WTC11 (cell line): ENCODE measurements at regions of chr1 and their contacts with region 1.

Region 1: GRCh38 chr1:178300352-178300699 is 196.4 kb downstream of the CLEC20A start:
- DNase-seq: no peak
- ATAC-seq: no peak
- H3K4me3 Mint-ChIP-seq: no peak overlapping the region
- H3K27ac Mint-ChIP-seq: peak overlapping the region; percentile 87; the same call in 1 of the 2 replicates
- H3K4me1 Mint-ChIP-seq: peaks cover 28% of the 10 kb centered on the region
- H3K27me3 Mint-ChIP-seq: no peaks in the 10 kb centered on the region
- CTCF ChIP-seq: no peak

Region 2: DNA sequence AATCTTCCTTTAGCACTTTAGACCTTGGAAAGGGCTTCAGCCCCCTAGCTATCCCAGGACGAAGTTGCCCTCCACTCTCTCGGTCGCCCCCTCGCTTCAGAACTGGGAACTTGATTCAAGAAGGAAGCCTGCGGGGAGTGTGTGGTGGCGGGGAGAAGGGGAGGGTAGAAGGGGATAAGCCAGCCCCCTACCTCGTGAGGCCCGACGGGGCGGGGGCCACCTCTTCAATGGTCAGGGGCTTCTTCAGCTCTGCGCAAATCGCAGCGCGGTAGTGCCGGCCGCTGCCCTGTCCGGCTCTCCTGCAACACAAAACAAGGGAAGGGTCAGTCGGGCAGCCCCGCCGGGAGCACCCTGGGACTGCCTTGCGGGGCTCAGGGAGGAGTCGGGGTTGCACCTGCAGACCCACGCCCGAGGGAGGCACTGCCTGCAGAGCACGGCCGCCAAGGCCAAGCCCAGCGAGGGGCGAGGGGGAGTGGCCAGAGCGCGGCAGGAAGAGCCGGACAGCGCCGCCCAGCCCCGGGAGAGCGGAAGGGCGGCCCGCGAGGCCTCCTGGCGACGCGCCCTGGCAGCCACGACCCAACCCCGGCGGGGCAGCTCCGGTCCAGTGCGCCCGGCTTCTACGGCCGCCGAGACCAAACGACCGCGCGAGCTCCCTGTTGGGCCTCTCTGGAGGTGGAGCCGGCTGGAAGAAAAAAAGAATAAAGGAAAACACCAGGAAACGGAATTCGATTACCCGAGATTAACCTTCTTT is 262.6 kb before region 1 on chr1:
- CTCF ChIA-PET with region 1: interaction called, 21 read pairs
- POLR2A ChIA-PET with region 1: no interaction called
- DNase-seq: peak; percentile 85
- ATAC-seq: peak; percentile 94
- H3K4me3 Mint-ChIP-seq: peak overlapping the region; percentile 58
- H3K27ac Mint-ChIP-seq: no peak overlapping the region
- H3K4me1 Mint-ChIP-seq: peaks cover 17% of the 10 kb centered on the region
- H3K27me3 Mint-ChIP-seq: peaks cover 2% of the 10 kb centered on the region; the same call in 1 of the 2 replicates
- CTCF ChIP-seq: peak; percentile 56

Region 3: DNA sequence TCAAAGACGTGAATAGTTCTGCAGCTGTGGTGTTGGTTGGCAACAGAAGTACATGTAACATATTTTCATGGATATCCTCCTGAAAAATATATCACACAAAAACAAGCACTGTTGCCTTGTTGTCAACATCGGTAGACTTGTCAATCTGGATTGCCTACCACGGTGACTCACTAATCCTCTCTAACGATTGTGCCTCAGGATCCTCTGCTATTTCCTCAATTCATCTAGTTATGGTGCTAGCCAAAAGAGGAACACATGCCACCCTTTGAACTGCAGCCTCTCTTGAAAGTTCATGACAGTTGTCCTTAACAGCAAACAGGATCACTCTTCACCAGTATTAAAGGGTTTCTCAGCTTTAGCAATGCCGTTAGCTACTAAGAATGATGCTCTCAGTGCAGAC is 180.7 kb before region 1 on chr1:
- CTCF ChIA-PET with region 1: no interaction called
- POLR2A ChIA-PET with region 1: no interaction called
- DNase-seq: no peak
- ATAC-seq: no peak
- H3K4me3 Mint-ChIP-seq: no peak overlapping the region
- H3K27ac Mint-ChIP-seq: no peak overlapping the region
- H3K4me1 Mint-ChIP-seq: peaks cover 24% of the 10 kb centered on the region
- H3K27me3 Mint-ChIP-seq: no peaks in the 10 kb centered on the region
- CTCF ChIP-seq: no peak

Region 4: DNA sequence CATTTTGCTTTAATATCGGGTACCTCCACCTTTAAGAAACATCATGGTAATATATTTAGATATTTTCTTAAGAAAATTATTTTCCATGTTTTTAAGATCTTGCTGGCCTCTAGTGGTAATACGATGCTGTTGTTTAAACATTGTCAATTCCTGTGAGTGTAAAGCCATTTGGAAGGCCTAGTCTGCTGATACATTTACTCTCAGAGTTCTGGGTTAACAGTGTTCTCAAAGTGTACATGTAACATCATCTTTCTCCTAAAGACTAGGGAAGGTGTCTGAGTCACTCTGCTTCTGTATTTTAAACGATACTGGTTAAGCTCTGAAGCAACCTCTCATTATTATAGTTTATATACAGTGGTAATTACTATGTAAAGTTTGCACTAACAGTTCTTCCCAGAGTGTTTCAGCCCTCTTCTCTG is 17.4 kb before region 1 on chr1:
- CTCF ChIA-PET with region 1: interaction called, 12 read pairs
- POLR2A ChIA-PET with region 1: no interaction called
- DNase-seq: no peak
- ATAC-seq: peak; percentile 37
- H3K4me3 Mint-ChIP-seq: peak overlapping the region; percentile 62
- H3K27ac Mint-ChIP-seq: peak overlapping the region; percentile 96
- H3K4me1 Mint-ChIP-seq: peaks cover 77% of the 10 kb centered on the region
- H3K27me3 Mint-ChIP-seq: no peaks in the 10 kb centered on the region
- CTCF ChIP-seq: no peak

Region 5: GRCh38 chr1:178310685-178311105 is 10.4 kb after region 1 on chr1:
- CTCF ChIA-PET with region 1: interaction called, 40 read pairs
- POLR2A ChIA-PET with region 1: no interaction called
- DNase-seq: no peak
- ATAC-seq: peak; percentile 88
- H3K4me3 Mint-ChIP-seq: no peak overlapping the region
- H3K27ac Mint-ChIP-seq: peak overlapping the region; percentile 73; the same call in 1 of the 2 replicates
- H3K4me1 Mint-ChIP-seq: peaks cover 16% of the 10 kb centered on the region
- H3K27me3 Mint-ChIP-seq: no peaks in the 10 kb centered on the region
- CTCF ChIP-seq: peak; percentile 59; the same call in 1 of the 2 replicates

Region 6: DNA sequence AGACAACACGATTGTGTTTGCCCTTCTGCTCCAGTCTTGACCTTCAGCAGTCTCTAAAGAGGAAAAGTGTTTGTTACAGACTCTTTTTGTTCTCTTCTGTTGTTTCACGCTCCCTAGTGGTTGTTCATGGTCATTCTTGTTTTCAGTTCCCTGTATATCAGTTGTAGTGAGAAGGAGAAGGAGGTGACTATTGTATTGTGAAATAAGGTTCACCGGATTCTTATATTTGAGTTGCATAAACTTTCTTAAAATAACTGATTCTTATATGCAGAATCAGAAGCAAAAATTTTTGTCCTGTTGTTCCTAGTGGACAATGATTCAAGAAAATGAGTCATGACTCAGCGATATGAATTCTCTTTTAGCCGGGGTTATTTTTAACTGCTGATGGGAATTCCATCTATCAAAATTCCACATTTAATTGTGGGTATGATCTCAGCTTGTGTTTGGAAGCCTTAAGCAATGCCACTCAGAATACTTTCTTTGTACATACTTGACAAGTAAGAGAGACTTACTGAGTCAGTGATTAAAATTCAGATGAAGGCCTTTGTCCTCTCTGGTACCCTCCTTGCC is 44.3 kb after region 1 on chr1:
- CTCF ChIA-PET with region 1: interaction called, 14 read pairs
- POLR2A ChIA-PET with region 1: no interaction called
- DNase-seq: no peak
- ATAC-seq: peak; percentile 62
- H3K4me3 Mint-ChIP-seq: peak overlapping the region; percentile 42
- H3K27ac Mint-ChIP-seq: peak overlapping the region; percentile 76
- H3K4me1 Mint-ChIP-seq: peaks cover 54% of the 10 kb centered on the region
- H3K27me3 Mint-ChIP-seq: no peaks in the 10 kb centered on the region
- CTCF ChIP-seq: 0 out of 2 replicates have a peak, but pooled peaks have one; percentile 19

Region 7: GRCh38 chr1:178379807-178380206 is 79.5 kb after region 1 on chr1:
- CTCF ChIA-PET with region 1: interaction called, 12 read pairs
- POLR2A ChIA-PET with region 1: no interaction called
- DNase-seq: peak; percentile 80
- ATAC-seq: peak; percentile 91
- H3K4me3 Mint-ChIP-seq: no peak overlapping the region; the same call in 1 of the 2 replicates
- H3K27ac Mint-ChIP-seq: no peak overlapping the region
- H3K4me1 Mint-ChIP-seq: peaks cover 19% of the 10 kb centered on the region
- H3K27me3 Mint-ChIP-seq: no peaks in the 10 kb centered on the region
- CTCF ChIP-seq: peak; percentile 88

Region 8: DNA sequence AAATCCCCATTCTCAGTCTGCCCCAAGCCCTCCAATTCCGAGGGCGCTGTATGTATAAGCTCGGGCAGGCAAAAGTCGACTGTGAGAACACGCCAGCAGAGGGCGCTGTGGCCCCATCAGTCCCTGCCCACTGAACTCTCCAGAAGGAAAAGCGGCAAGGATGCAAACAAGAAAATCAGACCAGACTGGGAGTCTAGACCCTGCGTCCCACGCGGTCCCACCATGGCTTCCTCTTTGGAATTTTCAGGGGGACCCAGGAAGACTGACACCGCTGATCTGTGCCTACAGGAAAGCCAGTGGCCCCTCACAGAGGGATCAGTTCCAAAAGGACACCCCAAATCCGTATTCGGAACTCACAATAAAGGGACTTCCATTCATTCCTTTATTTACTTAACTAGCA is 232.1 kb after region 1 on chr1:
- CTCF ChIA-PET with region 1: interaction called, 20 read pairs
- POLR2A ChIA-PET with region 1: no interaction called
- DNase-seq: peak; percentile 88
- ATAC-seq: peak; percentile 89
- H3K4me3 Mint-ChIP-seq: no peak overlapping the region
- H3K27ac Mint-ChIP-seq: no peak overlapping the region
- H3K4me1 Mint-ChIP-seq: 0 out of 2 replicates have a peak, but pooled peaks cover 2% of the 10 kb centered on the region
- H3K27me3 Mint-ChIP-seq: no peaks in the 10 kb centered on the region; the same call in 1 of the 2 replicates
- CTCF ChIP-seq: peak; percentile 96

Region 9: DNA sequence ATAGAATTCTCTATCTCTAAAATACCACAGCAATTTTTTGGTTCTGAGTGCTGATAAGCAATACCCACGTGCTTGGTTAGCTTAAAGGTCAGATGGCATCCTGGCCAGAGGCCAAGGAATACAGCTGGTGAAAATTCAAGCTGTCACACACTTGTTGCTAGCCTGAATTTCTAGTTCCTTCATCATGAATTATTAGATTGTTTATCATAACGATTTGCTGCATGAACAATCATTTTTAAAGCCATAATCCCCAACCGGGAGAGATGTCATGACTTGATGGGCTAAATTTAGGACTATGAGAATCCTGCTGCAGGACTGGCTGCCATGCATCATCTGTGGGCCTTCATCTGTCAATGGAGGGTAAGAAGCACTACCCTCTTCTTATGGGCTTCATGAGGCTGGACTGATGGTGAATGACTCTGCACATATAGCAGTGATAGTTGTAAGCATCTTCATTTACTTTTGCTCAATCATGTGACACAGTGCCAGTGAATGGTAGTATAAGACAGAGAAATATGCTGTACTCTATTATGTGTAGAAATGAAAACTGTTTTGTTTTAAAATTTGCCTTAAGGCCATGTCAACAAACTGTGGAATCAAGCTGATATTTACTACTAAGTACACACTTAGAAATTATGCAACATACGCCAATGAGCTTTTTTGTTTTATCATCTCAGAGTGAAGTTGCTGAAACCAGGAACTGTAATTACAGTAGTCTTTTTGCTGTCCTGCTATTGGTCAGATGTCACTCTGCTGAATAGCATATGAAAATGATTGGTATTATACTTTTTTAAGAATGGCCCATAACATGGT is 344.2 kb after region 1 on chr1:
- CTCF ChIA-PET with region 1: no interaction called
- POLR2A ChIA-PET with region 1: no interaction called
- DNase-seq: no peak
- ATAC-seq: no peak
- H3K4me3 Mint-ChIP-seq: no peak overlapping the region
- H3K27ac Mint-ChIP-seq: no peak overlapping the region; the same call in 1 of the 2 replicates
- H3K4me1 Mint-ChIP-seq: peaks cover 36% of the 10 kb centered on the region
- H3K27me3 Mint-ChIP-seq: no peaks in the 10 kb centered on the region
- CTCF ChIP-seq: no peak